ENCODE measurements at regions of chr2 and their contacts with region 1.

Region 1: DNA sequence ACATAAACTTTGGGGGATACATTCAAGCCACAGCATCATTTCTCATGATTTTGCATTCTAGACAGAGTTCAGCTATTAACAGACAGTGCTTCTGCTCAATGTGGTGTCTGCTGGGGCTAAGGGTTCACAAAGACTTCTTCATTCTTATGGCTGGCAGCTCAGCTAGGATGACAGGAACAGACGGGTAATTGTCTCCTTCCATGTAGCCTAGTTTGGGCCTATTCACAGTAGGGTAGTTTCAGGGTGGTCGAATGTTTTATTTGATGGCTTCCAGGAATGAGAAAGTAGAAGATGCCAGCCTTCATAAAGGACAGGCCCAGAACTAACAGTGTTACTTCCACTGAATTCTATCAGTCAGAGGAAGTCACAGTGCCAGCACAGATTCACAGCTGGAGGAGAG is 26.0 kb upstream of the BCL2L11 start:
- DNase-seq: no peak
- ATAC-seq: no peak
- H3K4me3 ChIP-seq: no peak overlapping the region
- H3K27ac ChIP-seq: no peak overlapping the region
- H3K4me1 ChIP-seq: no peaks in the 10 kb centered on the region
- H3K27me3 ChIP-seq: peaks cover 49% of the 10 kb centered on the region
- CTCF ChIP-seq: no peak
- POLR2A ChIP-seq: no peak
- RAD21 ChIP-seq: no peak

Region 2: GRCh38 chr2:111123751-111124150 is 29.1 kb after region 1 on chr2:
- CTCF ChIA-PET with region 1: no interaction called
- POLR2A ChIA-PET with region 1: interaction called, 12 read pairs
- dilution Hi-C with region 1: no loop called
- in situ Hi-C with region 1: no loop called
- intact Hi-C with region 1: no loop called
- DNase-seq: no peak
- ATAC-seq: no peak
- H3K4me3 ChIP-seq: no peak overlapping the region
- H3K27ac ChIP-seq: no peak overlapping the region
- H3K4me1 ChIP-seq: no peaks in the 10 kb centered on the region; the same call in 1 of the 2 replicates
- H3K27me3 ChIP-seq: peaks cover 5% of the 10 kb centered on the region; the same call in 1 of the 2 replicates
- CTCF ChIP-seq: no peak
- POLR2A ChIP-seq: no peak
- RAD21 ChIP-seq: no peak

Region 3: GRCh38 chr2:111135910-111136297 is 41.2 kb after region 1 on chr2:
- CTCF ChIA-PET with region 1: no interaction called
- POLR2A ChIA-PET with region 1: interaction called, 13 read pairs
- dilution Hi-C with region 1: no loop called
- in situ Hi-C with region 1: no loop called
- intact Hi-C with region 1: no loop called
- DNase-seq: peak; percentile 40
- ATAC-seq: no peak
- H3K4me3 ChIP-seq: no peak overlapping the region
- H3K27ac ChIP-seq: no peak overlapping the region
- H3K4me1 ChIP-seq: no peaks in the 10 kb centered on the region; the same call in 1 of the 2 replicates
- H3K27me3 ChIP-seq: no peaks in the 10 kb centered on the region
- CTCF ChIP-seq: 0 out of 2 replicates have a peak, but pooled peaks have one; percentile 5
- POLR2A ChIP-seq: no peak
- RAD21 ChIP-seq: no peak

Measured in IMR-90 (cell line).